Sigmoid colon (tissue), 7 donors: ENCODE measurements at regions of chr11 and their contacts with region 1.

Region 1: DNA sequence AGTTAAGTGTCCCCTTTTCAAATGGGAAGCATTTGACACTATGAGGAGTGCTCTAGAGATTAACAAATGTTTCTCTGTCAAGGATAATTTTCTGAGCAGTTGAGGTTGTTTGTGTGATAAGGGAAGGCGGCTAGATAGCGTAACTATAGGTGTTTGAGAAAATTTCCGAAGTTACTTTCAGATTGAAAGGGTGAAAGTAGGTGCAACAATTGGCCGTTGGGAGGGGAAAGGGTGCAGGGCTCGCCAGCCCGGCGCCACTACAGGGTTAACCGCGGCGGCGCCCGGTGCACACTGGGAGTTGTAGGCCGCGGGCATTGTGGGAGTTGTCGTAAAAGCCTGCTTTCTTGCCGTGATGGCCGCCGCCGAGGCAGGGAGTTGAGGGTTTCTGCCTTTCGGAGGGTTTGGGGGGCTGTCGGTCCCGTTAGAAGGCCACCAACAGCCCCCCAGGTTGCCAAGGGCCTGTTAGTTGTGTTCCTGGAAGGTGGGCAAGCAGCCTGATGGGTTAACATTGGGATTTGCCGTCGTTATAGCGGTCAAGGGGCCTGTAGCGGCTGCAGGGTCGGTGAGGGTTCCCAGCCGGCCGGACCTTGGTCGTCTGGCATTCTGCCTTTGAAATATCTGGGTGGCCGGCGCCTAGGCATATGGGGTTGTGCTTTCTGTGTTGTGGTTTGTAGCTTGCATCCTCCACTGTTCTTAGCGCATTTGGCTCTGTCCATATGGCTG is 36.5 kb upstream of the HSD17B12 start:
- DNase-seq: peak; percentile 90
- H3K4me3 ChIP-seq: peak overlapping the region; percentile 53 to 92 (median 80)
- H3K27ac ChIP-seq: peak overlapping the region; percentile 65 to 81 (median 74)
- H3K4me1 ChIP-seq: peaks cover 0 to 22% (median 10%) of the 10 kb centered on the region in 4 donors
- H3K27me3 ChIP-seq: peaks cover 0 to 38% (median 0%) of the 10 kb centered on the region in 3 donors
- CTCF ChIP-seq: no peak
- EP300 ChIP-seq: peak in 1 of 4 donors; percentile 45
- POLR2A ChIP-seq: peak in 1 of 2 donors; percentile 11

Region 2: GRCh38 chr11:43802509-43802908 is 158.4 kb after region 1 on chr11:
- intact Hi-C with region 1: no loop called
- DNase-seq: no peak
- H3K4me3 ChIP-seq: no peak overlapping the region
- H3K27ac ChIP-seq: no peak overlapping the region
- H3K4me1 ChIP-seq: no peaks in the 10 kb centered on the region
- H3K27me3 ChIP-seq: no peaks in the 10 kb centered on the region
- CTCF ChIP-seq: no peak
- EP300 ChIP-seq: no peak
- POLR2A ChIP-seq: no peak

Region 3: DNA sequence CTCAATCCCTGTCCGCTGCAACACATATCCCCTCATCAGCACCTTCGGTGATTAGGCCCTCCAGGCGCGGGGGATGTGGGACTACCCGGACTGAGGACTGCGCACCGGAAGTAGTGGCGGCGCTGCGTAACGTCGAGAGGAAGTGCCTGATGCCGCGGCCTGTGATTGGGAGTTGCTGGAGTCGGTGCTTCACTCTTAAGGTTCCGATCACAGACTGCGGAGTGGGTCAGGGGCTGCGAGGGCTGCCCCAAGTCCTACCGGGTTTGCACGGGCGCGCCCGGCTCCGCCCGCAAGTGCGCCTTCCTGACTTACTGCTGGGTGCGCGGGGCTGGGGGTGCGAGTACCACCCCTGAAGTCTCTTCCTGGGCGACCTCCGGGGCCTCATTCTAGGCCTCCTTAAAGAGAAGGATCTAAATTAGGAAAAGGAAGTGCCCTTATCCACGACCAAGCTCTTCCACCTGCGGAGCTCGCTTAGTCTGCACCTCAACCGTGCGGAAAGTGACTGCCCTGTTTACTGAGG is 236.6 kb after region 1 on chr11 and contains the start of gene ALKBH3:
- intact Hi-C with region 1: loop called (anchors 5 kb)
- DNase-seq: peak; percentile 96
- H3K4me3 ChIP-seq: peak within 1 kb of the TSS; percentile 65 to 89 (median 80)
- H3K27ac ChIP-seq: peak within 1 kb of the TSS; percentile 64 to 80 (median 73)
- H3K4me1 ChIP-seq: peaks cover 0 to 21% (median 17%) of the 10 kb centered on the region in 4 donors
- H3K27me3 ChIP-seq: peaks cover 0 to 9% (median under 1%) of the 10 kb centered on the region in 3 donors
- CTCF ChIP-seq: no peak
- EP300 ChIP-seq: peak in 1 of 4 donors; percentile 3
- POLR2A ChIP-seq: no peak
- total RNA-seq, gene ALKBH3: 25.7 to 31.2 (median 30.6) TPM